Right ventricle myocardium inferior (tissue), 1 donor: ENCODE measurements at regions of chr12 and their contacts with region 1.

Region 1: DNA sequence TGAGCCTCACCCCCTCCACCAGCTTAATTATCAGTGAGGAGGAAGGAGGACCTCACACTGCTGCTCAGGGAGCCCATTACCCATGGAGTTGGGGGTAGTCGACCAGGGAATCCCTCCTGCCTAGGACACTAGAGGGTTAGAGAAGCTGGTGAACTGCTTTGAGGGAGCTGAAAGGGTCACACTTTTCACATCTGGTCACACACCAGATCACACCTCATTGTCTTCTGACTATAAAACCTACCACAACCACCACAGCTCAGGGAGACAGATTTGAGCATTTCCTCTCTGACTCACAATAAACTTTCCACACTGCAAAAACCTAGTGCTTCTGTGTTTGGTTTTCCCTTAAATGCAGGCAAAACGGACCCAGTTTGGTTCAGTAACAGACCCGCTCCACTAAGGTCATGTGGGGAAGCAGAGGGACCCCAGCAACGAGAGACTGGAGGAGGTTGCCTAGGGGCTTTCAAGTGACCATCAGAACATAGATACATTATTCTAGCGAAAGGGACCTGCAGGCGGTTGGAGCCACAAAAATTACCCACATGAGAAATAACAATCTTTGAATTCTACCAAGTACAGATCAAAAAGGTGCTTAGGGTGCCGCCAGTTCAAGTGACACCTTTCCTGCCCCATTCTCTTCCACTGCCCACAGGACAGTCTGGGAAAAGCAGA is 151.4 kb upstream of the AVPR1A start:
- DNase-seq: no peak
- ATAC-seq: no peak

Region 2: GRCh38 chr12:63149909-63150712 is 152.3 kb before region 1 on chr12:
- intact Hi-C with region 1: loop called (anchors 10 kb)
- DNase-seq: peak; percentile 65
- ATAC-seq: no peak